ENCODE measurements at regions of chr3 and their contacts with region 1.

Region 1: DNA sequence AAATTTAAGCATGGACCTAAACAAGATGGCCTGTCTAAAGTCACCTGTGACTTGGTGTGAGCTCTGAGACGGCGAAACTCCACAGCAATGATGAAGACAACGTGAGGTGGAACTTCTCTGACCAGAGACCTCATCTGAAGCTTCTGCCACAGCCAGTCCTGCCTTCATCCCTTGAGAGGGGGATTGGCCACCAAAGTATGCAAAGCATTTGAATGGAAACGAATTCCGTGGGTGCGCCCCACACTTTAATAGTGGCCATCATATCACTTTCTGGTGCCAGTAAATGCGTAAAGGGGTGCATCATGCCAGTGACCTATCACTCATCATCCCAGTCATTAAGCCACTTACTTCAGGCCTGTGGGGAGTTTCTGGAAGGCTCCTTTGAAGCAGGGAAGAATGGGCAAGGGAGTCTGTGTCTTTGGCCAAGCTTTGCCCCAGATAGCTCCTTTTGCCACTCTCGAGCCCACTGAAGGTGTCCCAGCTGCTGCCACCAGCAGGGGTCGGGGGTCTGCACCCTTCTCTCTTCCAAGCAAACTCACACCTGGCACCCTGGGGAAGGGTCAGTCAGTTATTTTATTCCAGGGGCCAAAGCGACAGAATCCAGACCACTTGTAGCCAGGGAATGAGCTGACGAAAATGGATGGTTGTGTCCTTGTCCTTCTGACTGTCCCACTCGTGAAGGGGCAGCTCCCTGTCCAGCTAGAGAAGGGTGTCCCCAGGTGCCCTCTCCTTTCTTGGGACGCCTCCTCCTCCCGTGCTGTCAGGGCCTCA is 17.7 kb downstream of the MUC20 start:
- DNase-seq: no peak
- H3K4me3 ChIP-seq: no peak overlapping the region
- H3K27ac ChIP-seq: no peak overlapping the region
- H3K4me1 ChIP-seq: no peaks in the 10 kb centered on the region
- H3K27me3 ChIP-seq: peaks cover 2% of the 10 kb centered on the region
- CTCF ChIP-seq: no peak

Region 2: DNA sequence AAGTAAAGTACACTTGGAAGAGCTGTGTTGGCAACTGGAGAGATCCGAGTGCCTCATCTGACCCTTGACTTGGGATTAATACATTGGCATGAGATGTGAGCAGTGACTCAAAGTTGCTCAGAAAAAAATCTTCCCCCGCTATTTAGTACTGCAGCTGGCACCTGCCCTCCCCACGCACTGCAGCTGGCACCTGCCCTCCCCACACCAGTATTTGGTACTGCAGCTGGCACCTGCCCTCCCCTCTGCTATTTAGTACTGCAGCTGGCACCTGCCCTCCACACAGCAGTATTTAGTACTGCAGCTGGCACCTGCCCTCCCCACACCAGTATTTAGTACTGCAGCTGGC is 21.6 kb before region 1 on chr3:
- CTCF ChIA-PET with region 1: no interaction called
- dilution Hi-C with region 1: no loop called
- in situ Hi-C with region 1: no loop called
- intact Hi-C with region 1: no loop called
- DNase-seq: peak; percentile 64
- H3K4me3 ChIP-seq: no peak overlapping the region
- H3K27ac ChIP-seq: no peak overlapping the region
- H3K4me1 ChIP-seq: no peaks in the 10 kb centered on the region
- H3K27me3 ChIP-seq: peaks cover 6% of the 10 kb centered on the region
- CTCF ChIP-seq: no peak

Region 3: DNA sequence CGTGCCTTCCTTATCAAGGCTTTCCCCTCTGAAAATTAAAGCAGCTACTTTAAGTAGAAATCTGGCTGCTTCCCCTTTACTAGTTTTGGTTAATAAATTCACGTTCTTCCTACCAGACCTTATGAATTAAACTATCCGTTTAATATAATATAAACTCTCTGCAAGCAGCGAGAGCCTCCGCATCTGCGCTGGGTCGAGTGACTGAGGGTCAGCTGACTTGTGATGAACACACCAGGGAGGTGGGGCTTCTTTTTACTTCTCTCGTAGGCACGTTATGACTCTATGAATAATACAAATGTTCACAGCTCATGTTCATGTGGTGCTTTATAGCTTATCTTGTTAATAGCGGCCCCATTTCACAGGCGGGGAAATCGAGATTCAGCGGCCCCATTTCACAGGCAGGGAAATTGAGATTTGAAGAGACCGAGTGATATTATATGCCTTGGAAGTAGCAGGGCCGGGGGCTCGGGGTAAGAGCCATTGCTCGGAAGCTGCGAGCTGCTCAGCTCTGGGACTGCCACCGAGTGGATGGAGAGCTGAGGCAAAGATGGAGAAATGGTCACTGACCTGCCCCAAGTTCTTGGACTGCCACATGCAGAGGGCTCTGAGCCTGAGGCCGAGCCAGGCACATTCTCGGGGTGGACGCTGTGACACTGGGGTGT is 65.0 kb after region 1 on chr3:
- CTCF ChIA-PET with region 1: no interaction called
- dilution Hi-C with region 1: loop called (anchors 5 kb)
- in situ Hi-C with region 1: no loop called
- intact Hi-C with region 1: no loop called
- DNase-seq: no peak
- H3K4me3 ChIP-seq: no peak overlapping the region
- H3K27ac ChIP-seq: no peak overlapping the region
- H3K4me1 ChIP-seq: no peaks in the 10 kb centered on the region
- H3K27me3 ChIP-seq: peaks cover 8% of the 10 kb centered on the region
- CTCF ChIP-seq: no peak

Measured in mammary epithelial cell (primary cell).